H1 (cell line): ENCODE measurements at regions of chr18 and their contacts with region 1.

Region 1: DNA sequence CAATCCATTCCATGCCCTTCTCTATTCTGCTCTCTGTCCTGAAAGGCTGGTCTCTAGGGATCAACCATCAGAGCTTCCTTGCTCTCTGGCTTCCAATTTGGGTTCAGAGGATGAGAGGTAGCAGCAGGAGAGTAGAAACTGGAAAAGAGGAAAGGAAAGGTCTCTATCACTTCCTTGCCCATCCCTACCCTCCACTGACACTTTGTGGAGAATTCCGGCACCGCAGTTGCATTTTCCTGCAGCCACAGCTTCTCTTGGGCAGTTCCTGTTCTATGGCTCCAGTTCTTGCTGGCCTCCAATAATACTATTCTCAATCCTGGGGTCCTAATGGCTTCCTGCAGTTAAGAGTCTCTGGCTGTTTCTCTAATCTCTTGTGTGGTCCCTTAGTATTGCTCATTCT is 13.3 kb upstream of the IMPACT start:
- DNase-seq: peak in 1 of 2 experiments; percentile 70
- H3K4me3 ChIP-seq: no peak overlapping the region
- H3K27ac ChIP-seq: no peak overlapping the region
- H3K4me1 ChIP-seq: peaks cover 0 to 4% (median 0%) of the 10 kb centered on the region in 4 experiments; a peak in 1 of 7 replicates
- H3K27me3 ChIP-seq: no peaks in the 10 kb centered on the region
- CTCF ChIP-seq: peak; percentile 62 to 74 (median 71)
- EP300 ChIP-seq: no peak
- POLR2A ChIP-seq: no peak
- RAD21 ChIP-seq: peak; percentile 88 to 89

Region 2: GRCh38 chr18:24354286-24354685 is 58.9 kb before region 1 on chr18:
- CTCF ChIA-PET with region 1: interaction called, 107 read pairs
- POLR2A ChIA-PET with region 1: interaction called, 7 read pairs
- DNase-seq: peak in 1 of 2 experiments; percentile 39
- H3K4me3 ChIP-seq: no peak overlapping the region
- H3K27ac ChIP-seq: no peak overlapping the region
- H3K4me1 ChIP-seq: peaks cover 0 to 2% (median 1%) of the 10 kb centered on the region in 4 experiments; a peak in 3 of 7 replicates
- H3K27me3 ChIP-seq: no peaks in the 10 kb centered on the region
- CTCF ChIP-seq: no peak
- EP300 ChIP-seq: no peak
- POLR2A ChIP-seq: peak in 1 of 2 experiments; percentile 24; a peak in 1 of 3 replicates
- RAD21 ChIP-seq: no peak

Region 3: DNA sequence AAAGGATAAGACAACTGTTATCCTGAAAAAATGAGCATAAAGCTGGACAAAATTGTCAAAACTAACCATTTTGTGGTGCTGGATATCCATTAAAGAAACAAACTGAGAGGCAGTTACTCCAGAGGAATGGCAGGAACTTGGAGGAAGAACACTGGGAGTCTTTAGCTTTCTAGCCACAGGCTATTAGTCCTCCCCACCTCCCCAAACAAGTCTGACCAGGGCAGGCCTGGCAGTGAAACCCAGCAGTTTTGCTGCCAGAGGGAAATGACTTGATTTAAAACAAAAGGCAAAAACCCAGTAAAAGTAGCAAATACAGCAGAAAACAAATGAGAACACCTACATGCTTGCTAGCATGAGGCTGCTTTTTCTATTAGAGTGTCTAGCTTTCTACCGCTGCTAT is 50.4 kb before region 1 on chr18:
- CTCF ChIA-PET with region 1: interaction called, 107 read pairs
- POLR2A ChIA-PET with region 1: interaction called, 7 read pairs
- DNase-seq: peak in 1 of 2 experiments; percentile 34
- H3K4me3 ChIP-seq: no peak overlapping the region
- H3K27ac ChIP-seq: no peak overlapping the region
- H3K4me1 ChIP-seq: 0 out of 7 replicates have a peak, but pooled peaks cover 0 to 2% (median 0%) of the 10 kb centered on the region in 4 experiments
- H3K27me3 ChIP-seq: no peaks in the 10 kb centered on the region
- CTCF ChIP-seq: no peak
- EP300 ChIP-seq: no peak
- POLR2A ChIP-seq: no peak
- RAD21 ChIP-seq: no peak

Region 4: GRCh38 chr18:24368749-24369148 is 44.4 kb before region 1 on chr18:
- CTCF ChIA-PET with region 1: interaction called, 11 read pairs
- POLR2A ChIA-PET with region 1: no interaction called
- DNase-seq: no peak
- H3K4me3 ChIP-seq: no peak overlapping the region
- H3K27ac ChIP-seq: no peak overlapping the region
- H3K4me1 ChIP-seq: peaks cover 0 to 4% (median 2%) of the 10 kb centered on the region in 4 experiments; a peak in 2 of 7 replicates
- H3K27me3 ChIP-seq: no peaks in the 10 kb centered on the region
- CTCF ChIP-seq: no peak
- EP300 ChIP-seq: no peak
- POLR2A ChIP-seq: no peak
- RAD21 ChIP-seq: no peak

Region 5: DNA sequence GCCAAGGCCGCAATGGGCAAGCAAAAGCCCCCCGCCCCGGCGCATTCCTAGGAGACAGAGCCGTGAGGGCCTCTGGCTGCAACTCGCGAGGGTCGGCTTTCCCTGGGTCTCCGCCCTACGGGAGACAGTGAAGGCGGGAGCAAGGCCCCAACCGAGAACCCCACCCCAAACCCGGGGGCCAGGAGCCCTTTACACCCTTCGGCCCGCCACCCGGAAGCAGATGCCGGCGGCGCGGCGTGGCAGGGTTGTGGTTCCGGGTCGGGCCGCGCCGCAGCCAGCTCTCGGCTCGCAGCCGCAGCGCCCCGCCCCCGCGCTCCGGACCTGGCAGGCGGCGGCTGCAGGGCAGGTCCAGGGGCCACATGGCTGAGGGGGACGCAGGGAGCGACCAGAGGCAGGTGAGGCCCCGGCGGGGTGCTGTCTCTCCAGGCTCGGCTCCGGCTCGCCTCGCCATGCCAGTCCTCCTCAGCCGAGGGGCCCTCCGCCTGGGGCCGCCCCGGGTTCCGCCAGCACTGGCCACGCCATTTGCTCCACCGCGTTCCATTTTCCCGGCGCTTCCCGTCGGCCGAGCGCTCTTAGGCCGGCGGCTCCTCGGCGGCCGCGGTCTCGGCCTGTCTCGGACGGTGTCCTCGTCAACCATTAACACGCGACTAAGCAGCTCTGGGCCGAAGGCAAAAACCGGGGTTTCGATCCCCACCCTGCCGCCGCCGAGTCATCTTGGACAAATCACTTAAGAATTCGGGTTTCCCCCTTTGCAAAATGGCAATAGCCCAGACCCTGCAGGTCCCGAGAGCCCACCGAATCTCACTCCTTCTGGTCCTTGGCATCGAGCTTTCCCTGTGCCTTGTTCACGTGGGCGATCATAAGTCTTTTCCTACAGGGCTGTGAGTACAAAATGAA is 13.5 kb after region 1 on chr18 and contains the start of gene IMPACT:
- CTCF ChIA-PET with region 1: interaction called, 10 read pairs
- POLR2A ChIA-PET with region 1: interaction called, 12 read pairs
- DNase-seq: peak; percentile 81 to 95
- H3K4me3 ChIP-seq: peak within 1 kb of the TSS; percentile 83 to 94 (median 84)
- H3K27ac ChIP-seq: peak within 1 kb of the TSS; percentile 90
- H3K4me1 ChIP-seq: peaks cover 0 to 6% (median 1%) of the 10 kb centered on the region in 4 experiments; a peak in 2 of 7 replicates
- H3K27me3 ChIP-seq: no peaks in the 10 kb centered on the region
- CTCF ChIP-seq: no peak
- EP300 ChIP-seq: peak in 1 of 2 experiments; percentile 84; a peak in 1 of 3 replicates
- POLR2A ChIP-seq: peak; percentile 73 to 98
- RAD21 ChIP-seq: no peak
- total RNA-seq, gene IMPACT: 44.6 and 50.6 TPM in 2 replicates

Region 6: DNA sequence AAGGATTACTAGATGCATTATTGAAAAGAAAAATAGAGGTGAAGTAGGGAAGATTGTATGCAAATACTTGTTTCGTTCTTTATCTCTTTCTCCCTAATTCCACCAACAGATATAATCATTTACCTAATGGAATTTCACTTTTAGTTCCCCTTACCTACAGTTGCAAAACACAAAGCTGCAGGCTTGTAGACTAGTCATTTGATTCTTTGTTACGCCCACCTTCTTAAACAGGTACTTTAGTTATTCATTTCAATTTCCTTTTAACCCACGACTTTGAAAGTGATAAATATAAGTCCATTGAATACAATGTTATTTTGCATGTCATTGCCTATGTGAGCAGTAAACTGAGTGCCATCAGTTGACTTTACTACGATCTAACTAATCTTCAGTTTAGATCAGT is 43.4 kb after region 1 on chr18:
- CTCF ChIA-PET with region 1: no interaction called
- POLR2A ChIA-PET with region 1: no interaction called
- DNase-seq: no peak
- H3K4me3 ChIP-seq: no peak overlapping the region
- H3K27ac ChIP-seq: no peak overlapping the region
- H3K4me1 ChIP-seq: no peaks in the 10 kb centered on the region
- H3K27me3 ChIP-seq: no peaks in the 10 kb centered on the region
- CTCF ChIP-seq: no peak
- EP300 ChIP-seq: no peak
- POLR2A ChIP-seq: no peak
- RAD21 ChIP-seq: no peak